ENCODE measurements at regions of chrX and their contacts with region 1.

Region 1: DNA sequence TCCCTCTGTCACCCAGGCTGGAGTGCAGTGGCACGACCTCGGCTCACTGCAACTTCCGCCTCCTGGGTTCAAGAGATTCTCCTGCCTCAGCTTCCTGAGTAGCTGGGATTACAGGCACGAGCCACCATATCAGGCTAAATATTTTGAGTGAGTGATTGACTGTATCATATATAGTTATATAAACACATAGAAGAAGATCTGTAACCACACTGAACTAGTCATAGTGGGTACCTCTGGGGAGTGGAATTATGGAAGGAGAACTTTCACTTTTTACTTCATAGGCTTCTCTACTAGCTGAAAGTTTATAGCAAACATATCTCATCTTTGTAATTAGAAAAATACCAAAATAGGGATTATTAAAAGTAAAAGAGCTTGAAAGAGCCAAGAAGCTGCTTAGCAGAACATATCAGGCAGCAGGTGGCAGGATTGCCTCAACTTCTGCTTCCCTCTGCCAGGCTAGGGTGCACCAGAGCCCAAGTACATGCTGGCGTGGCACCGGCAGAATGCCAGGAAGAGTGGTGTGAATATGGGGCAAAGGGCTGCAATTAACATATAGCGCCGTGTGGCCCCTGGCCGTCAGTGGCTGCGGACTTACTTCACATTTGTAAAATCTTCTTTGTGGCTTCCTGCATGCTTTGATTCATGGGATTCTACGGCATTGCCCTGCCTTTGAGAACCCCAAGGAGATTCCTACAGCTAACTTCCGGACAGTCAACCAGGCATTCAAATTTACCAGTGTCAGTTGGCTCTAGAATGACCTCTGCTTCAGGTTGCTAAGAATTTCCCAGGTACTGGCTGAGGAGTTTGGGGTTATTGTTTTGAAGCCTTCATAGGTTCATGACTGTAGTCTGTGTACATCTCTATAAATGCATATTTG is 39.4 kb upstream of the CD40LG start:
- DNase-seq: peak; percentile 38 to 86 (median 60)
- ATAC-seq: peak; percentile 92
- H3K4me3 ChIP-seq: peak overlapping the region; percentile 10
- H3K4me3 Mint-ChIP-seq: peak overlapping the region; percentile 73
- H3K27ac ChIP-seq: peak overlapping the region in 1 of 2 donors; percentile 2
- H3K27ac Mint-ChIP-seq: peak overlapping the region; percentile 91
- H3K4me1 ChIP-seq: peaks cover 24% of the 10 kb centered on the region
- H3K4me1 Mint-ChIP-seq: peaks cover 47% of the 10 kb centered on the region
- H3K27me3 ChIP-seq: no peaks in the 10 kb centered on the region
- H3K27me3 Mint-ChIP-seq: no peaks in the 10 kb centered on the region
- CTCF ChIP-seq: peak; percentile 63

Region 2: DNA sequence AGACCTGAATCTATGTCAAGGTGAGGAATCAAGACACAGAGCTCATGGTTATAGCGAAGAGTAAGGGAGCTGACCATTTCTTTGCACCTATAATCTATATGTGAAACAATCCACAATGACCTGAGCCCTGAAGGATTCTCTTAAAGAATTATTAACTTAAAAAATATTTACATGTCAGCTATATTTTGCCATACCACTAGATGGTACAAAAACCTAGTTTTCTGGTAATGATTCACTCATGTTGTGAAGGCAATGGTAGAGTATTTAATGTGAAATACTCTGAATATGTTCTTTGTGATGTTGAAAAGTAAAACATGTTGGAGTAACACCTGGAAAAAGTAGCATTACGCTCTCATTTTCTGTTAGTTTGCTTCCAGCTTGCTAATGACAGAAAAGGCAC is 36.5 kb before region 1 on chrX:
- CTCF ChIA-PET with region 1: interaction called, 3 read pairs
- POLR2A ChIA-PET with region 1: interaction called, 17 read pairs
- intact Hi-C with region 1: loop called in 1 of 2 experiments (anchors 5 kb)
- DNase-seq: peak in 3 of 14 experiments; percentile 28 to 36 (median 29)
- ATAC-seq: peak; percentile 34
- H3K4me3 ChIP-seq: no peak overlapping the region
- H3K4me3 Mint-ChIP-seq: peak overlapping the region; percentile 34
- H3K27ac ChIP-seq: no peak overlapping the region
- H3K27ac Mint-ChIP-seq: peak overlapping the region; percentile 17
- H3K4me1 ChIP-seq: peaks cover 3% of the 10 kb centered on the region
- H3K4me1 Mint-ChIP-seq: peaks cover 9% of the 10 kb centered on the region
- H3K27me3 ChIP-seq: no peaks in the 10 kb centered on the region
- H3K27me3 Mint-ChIP-seq: no peaks in the 10 kb centered on the region
- CTCF ChIP-seq: peak; percentile 27

Region 3: DNA sequence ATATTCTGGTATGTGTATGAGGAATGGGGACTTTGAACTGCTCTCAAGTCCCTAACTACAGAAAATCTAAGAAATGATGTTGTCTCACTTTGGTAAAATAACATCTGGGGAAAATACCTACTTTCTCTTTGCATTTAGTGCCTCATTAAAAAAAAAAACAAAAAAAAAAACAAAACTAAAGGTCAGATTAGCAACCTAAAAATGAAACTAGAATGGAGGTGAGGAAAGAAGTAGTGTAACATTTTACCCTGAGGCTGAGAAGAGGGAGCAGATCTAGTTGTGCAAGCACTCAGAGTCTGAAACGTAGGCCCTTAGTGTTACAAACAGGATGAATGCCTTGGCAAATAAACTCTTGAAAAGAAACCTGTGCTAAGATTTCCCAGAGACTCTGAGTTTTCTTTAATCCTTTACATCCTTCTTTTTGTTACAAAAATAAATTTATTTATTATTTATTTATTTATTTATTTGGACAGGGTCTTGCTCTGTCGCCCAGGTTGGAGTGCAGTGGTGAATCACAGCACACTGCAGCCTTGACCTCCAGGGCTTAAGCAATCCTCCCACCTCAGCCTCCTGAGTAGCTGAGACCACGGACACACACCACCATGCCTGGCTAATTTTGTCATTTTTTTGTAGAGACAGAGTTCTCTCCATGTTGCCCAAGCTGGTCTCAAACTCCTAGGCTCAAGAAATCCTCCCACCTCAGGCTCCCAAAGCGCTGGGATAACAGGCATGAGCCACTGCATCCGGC is 20.3 kb before region 1 on chrX:
- CTCF ChIA-PET with region 1: interaction called, 3 read pairs
- POLR2A ChIA-PET with region 1: interaction called, 6 read pairs
- intact Hi-C with region 1: loop called in 1 of 2 experiments (anchors 2 kb)
- DNase-seq: peak in 3 of 14 experiments; percentile 59 to 66 (median 63)
- ATAC-seq: peak; percentile 15
- H3K4me3 ChIP-seq: no peak overlapping the region
- H3K4me3 Mint-ChIP-seq: peak overlapping the region; percentile 7
- H3K27ac ChIP-seq: peak overlapping the region; percentile 59 to 72
- H3K27ac Mint-ChIP-seq: peak overlapping the region; percentile 92
- H3K4me1 ChIP-seq: peaks cover 49% of the 10 kb centered on the region
- H3K4me1 Mint-ChIP-seq: peaks cover 44% of the 10 kb centered on the region
- H3K27me3 ChIP-seq: no peaks in the 10 kb centered on the region
- H3K27me3 Mint-ChIP-seq: no peaks in the 10 kb centered on the region
- CTCF ChIP-seq: no peak

Region 4: DNA sequence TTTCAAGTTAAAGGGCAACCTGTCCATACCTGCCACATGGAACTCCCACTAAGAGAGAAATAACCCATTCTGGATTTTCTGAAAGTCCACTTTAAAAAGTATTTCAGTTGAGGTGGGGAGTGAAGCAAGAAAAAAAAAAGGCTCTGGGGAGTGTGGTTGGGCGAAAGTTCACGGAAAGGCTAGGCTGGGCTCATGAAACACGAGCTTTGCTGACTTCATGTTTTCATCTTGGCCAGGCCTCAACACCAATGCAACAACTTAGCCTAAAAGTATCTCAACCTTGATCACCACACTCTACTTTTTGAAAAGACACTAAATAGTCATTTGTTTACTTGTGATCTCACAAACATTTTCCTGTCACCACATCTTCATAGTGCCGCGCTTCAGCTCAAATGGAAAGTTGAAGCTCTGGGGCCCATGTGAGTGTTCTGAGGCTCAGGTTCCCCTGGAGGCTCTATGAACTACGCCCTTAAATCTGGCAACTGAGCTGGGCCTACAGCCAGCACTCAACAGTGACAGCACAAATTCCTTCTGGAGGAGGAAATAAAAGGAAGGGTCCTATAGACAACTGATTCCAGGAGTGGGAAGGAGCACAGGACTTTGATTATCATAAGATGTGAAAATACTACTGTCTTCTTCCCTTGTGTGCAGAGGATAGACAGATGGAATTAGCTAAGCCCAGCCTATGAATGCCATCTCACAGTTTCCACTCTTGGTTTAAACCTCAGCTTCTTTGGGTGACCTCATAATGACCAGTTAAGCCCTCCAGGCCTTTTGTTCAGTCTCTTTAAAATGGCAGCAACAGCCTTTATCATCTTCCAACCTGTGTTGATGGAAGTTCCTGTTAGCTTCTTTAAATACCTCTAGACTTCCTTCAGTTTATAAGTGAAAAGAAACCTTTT is 44.5 kb after region 1 on chrX:
- CTCF ChIA-PET with region 1: interaction called, 4 read pairs
- POLR2A ChIA-PET with region 1: interaction called, 32 read pairs
- intact Hi-C with region 1: loop called in 1 of 2 experiments (anchors 5 kb)
- DNase-seq: peak in 6 of 14 experiments; percentile 11 to 44 (median 29)
- ATAC-seq: peak; percentile 50
- H3K4me3 ChIP-seq: peak overlapping the region; percentile 80
- H3K4me3 Mint-ChIP-seq: peak overlapping the region; percentile 99
- H3K27ac ChIP-seq: peak overlapping the region; percentile 58 to 67
- H3K27ac Mint-ChIP-seq: peak overlapping the region; percentile 92
- H3K4me1 ChIP-seq: peaks cover 38% of the 10 kb centered on the region
- H3K4me1 Mint-ChIP-seq: peaks cover 69% of the 10 kb centered on the region
- H3K27me3 ChIP-seq: no peaks in the 10 kb centered on the region
- H3K27me3 Mint-ChIP-seq: no peaks in the 10 kb centered on the region
- CTCF ChIP-seq: no peak

Region 5: DNA sequence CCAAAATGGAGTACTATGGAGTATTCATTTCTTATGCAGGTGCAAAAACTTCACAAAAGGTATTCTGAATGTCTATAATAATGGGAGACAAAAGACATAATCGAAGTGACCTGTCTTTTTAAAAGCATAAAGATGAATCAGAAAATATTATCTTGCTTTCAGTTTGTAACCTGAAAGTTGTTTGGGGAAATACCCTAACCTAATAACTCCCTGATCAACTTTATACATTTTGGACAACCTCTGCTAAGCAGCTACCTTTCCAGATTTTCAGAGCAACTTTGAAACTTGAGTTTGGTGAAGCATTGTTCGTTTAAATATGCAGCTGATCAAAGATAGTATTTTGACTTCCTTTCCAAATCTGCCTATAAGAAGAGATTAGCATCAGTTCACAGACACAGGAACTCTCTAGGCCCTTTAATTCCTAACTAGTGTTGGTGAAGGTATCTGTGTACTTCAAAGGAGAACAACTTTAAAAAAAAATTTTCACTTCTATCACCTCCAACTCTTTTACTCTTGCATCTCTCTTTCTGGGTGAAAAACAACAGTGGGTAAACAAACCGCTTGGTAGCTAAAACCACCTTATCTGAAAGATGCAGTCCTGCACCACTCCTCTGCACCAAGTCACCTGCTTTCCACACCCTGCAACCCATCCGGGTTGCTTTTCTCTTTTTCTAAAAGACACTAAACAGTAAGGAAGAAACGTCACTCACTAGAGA is 65.9 kb after region 1 on chrX:
- CTCF ChIA-PET with region 1: no interaction called
- POLR2A ChIA-PET with region 1: interaction called, 15 read pairs
- intact Hi-C with region 1: no loop called
- DNase-seq: peak in 7 of 14 experiments; percentile 11 to 79 (median 45)
- ATAC-seq: peak; percentile 78
- H3K4me3 ChIP-seq: no peak overlapping the region
- H3K4me3 Mint-ChIP-seq: peak overlapping the region; percentile 89
- H3K27ac ChIP-seq: peak overlapping the region; percentile 29 to 61
- H3K27ac Mint-ChIP-seq: peak overlapping the region; percentile 95
- H3K4me1 ChIP-seq: peaks cover 60% of the 10 kb centered on the region
- H3K4me1 Mint-ChIP-seq: peaks cover 96% of the 10 kb centered on the region
- H3K27me3 ChIP-seq: no peaks in the 10 kb centered on the region
- H3K27me3 Mint-ChIP-seq: no peaks in the 10 kb centered on the region
- CTCF ChIP-seq: no peak

Region 6: DNA sequence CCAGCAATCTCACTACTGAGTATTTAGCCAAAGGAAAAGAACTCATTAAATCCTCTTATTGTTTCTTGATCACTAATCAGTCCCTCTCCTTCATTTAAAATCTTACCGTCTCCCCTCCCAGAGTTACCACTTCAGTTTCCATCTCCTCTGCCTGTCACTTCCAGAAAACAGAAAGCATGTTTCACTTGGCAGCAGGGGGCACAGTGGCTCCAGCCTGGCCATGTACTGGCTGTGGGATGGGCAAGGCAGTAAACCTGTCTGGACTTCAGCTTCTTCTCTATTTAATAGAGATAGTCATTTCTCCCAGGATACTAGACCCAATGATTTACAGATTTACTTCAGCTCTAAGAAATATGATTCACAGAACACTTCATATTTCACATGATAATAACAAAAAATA is 102.6 kb after region 1 on chrX:
- CTCF ChIA-PET with region 1: interaction called, 7 read pairs
- POLR2A ChIA-PET with region 1: no interaction called
- intact Hi-C with region 1: loop called in 1 of 2 experiments (anchors 1 kb)
- DNase-seq: peak in 5 of 14 experiments; percentile 8 to 50 (median 39)
- ATAC-seq: no peak
- H3K4me3 ChIP-seq: no peak overlapping the region
- H3K4me3 Mint-ChIP-seq: no peak overlapping the region
- H3K27ac ChIP-seq: peak overlapping the region in 1 of 2 donors; percentile 59
- H3K27ac Mint-ChIP-seq: peak overlapping the region; percentile 96
- H3K4me1 ChIP-seq: peaks cover 36% of the 10 kb centered on the region
- H3K4me1 Mint-ChIP-seq: peaks cover 50% of the 10 kb centered on the region
- H3K27me3 ChIP-seq: no peaks in the 10 kb centered on the region
- H3K27me3 Mint-ChIP-seq: no peaks in the 10 kb centered on the region
- CTCF ChIP-seq: no peak